HEK293 (cell line): ENCODE measurements at regions of chr15 and their contacts with region 1.

Region 1: GRCh38 chr15:74011610-74012009 is 17.1 kb downstream of the PML start:
- H3K4me3 ChIP-seq: no peak overlapping the region
- H3K27ac ChIP-seq: no peak overlapping the region
- H3K4me1 ChIP-seq: no peaks in the 10 kb centered on the region
- CTCF ChIP-seq: no peak

Region 2: DNA sequence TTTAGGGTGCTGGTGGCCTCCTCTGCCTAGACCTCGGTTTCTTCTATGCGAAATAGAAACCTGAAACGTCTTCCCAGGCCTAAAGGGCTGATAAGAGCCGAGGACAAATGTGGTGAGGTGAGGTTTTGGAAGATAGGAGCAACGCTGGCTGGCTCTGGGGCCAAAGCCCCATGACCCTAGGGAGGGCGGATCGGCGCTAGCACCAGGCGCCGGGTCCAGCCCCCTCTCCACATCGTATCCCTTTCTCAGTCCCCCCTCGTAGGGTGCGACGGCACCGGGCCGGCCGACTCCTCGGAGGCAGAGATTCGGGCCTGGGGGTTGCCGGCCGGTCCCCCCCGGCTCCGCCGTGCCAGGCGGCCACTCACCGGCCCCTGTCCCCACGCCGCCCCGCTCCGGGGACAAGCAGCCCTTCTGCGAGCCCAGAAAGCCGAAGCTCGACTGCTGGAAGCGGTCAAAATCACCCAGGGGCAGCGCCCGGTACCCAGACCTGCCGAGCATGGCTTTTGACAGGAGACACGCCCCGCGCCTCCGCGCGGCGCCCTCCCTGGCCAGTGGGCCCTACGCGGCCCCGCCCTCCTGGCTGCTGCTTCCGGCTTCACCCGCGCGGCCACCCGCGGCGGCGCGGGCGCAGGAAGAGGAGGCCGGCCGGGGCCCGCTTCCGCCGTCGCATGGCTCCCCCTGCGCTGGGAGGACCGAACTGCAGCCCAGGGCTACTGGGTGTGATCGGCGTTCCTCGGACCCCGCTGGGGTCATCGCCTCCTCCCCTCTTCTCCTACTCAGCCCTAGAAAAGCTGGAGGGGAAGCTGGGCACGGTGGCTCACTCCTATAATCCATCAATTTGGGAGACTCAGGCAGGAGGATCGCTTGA is 19.6 kb before region 1 on chr15 and contains the start of gene STOML1:
- CTCF ChIA-PET with region 1: interaction called, 29 read pairs
- POLR2A ChIA-PET with region 1: interaction called, 13 read pairs
- H3K4me3 ChIP-seq: peak within 1 kb of the TSS; percentile 66
- H3K27ac ChIP-seq: no peak within 1 kb of the TSS
- H3K4me1 ChIP-seq: peaks cover 9% of the 10 kb centered on the region; the same call in 1 of the 2 replicates
- CTCF ChIP-seq: peak; percentile 93

Region 3: GRCh38 chr15:74025436-74025835 is 13.8 kb after region 1 on chr15:
- CTCF ChIA-PET with region 1: no interaction called
- POLR2A ChIA-PET with region 1: no interaction called
- H3K4me3 ChIP-seq: no peak overlapping the region
- H3K27ac ChIP-seq: no peak overlapping the region
- H3K4me1 ChIP-seq: no peaks in the 10 kb centered on the region
- CTCF ChIP-seq: no peak